ENCODE measurements at regions of chr1 and their contacts with region 1.

Region 1: DNA sequence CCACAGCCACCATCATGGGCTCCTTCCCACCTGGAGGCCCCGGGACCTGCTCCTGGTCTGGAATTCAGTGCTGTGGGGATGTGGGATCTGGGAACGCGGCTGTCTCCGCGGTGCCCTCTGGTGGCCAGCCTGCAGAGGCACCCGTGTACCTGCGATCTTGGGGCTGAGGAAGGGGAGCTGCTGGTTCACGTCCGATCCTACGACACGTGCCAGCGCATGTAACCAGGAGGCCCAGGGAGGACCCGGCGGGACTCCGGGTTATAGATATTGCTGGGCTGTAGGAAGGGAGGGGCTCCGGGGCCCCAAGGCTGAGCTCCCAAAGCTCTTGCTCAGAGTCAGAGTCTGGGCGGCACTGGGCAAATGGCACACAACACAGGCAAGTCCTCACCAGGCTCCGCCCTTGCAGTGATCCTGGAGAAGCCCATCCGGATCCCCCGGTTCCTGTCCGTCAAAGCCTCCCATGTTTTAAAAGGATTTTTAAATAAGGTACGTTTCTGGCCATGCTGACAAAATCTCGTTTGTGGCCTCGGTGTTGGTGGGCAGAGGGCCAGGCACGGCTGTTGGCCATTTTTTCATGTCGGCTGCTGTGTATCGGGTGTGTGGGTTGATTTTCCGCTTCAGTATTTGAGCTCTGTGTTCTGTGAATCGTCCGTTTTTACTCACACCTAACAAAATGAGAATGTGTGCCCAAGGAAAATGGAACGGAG is 20.1 kb downstream of the FAAP20 start:
- DNase-seq: peak; percentile 63
- ATAC-seq: peak; percentile 72 to 79

Region 2: GRCh38 chr1:2133039-2133878 is 41.2 kb before region 1 on chr1:
- intact Hi-C with region 1: loop called in 1 of 2 experiments (anchors 2 kb)
- DNase-seq: peak; percentile 99
- ATAC-seq: peak; percentile 93 to 94

Region 3: GRCh38 chr1:2493691-2494322 is 319.3 kb after region 1 on chr1:
- intact Hi-C with region 1: no loop called
- DNase-seq: no peak
- ATAC-seq: no peak